GM12878 (cell line): ENCODE measurements at regions of chr4 and their contacts with region 1.

Region 1: GRCh38 chr4:128574706-128575105 is 234.8 kb upstream of the JADE1 start:
- DNase-seq: peak; percentile 25
- ATAC-seq: peak; percentile 99
- H3K4me3 ChIP-seq: no peak overlapping the region
- H3K27ac ChIP-seq: no peak overlapping the region
- H3K4me1 ChIP-seq: no peaks in the 10 kb centered on the region
- H3K27me3 ChIP-seq: no peaks in the 10 kb centered on the region
- CTCF ChIP-seq: peak; percentile 66 to 69 (median 68)
- EP300 ChIP-seq: no peak
- POLR2A ChIP-seq: no peak
- RAD21 ChIP-seq: peak; percentile 79

Region 2: GRCh38 chr4:128039568-128039967 is 535.1 kb before region 1 on chr4:
- CTCF ChIA-PET with region 1: no interaction called
- POLR2A ChIA-PET with region 1: no interaction called
- RAD21 ChIA-PET with region 1: no interaction called
- SMC1A ChIA-PET with region 1: no interaction called
- in situ Hi-C with region 1: no loop called
- intact Hi-C with region 1: no loop called
- DNase-seq: no peak
- ATAC-seq: no peak
- H3K4me3 ChIP-seq: no peak overlapping the region
- H3K27ac ChIP-seq: no peak overlapping the region
- H3K4me1 ChIP-seq: no peaks in the 10 kb centered on the region
- H3K27me3 ChIP-seq: no peaks in the 10 kb centered on the region
- CTCF ChIP-seq: no peak
- EP300 ChIP-seq: no peak
- POLR2A ChIP-seq: no peak
- RAD21 ChIP-seq: no peak

Region 3: DNA sequence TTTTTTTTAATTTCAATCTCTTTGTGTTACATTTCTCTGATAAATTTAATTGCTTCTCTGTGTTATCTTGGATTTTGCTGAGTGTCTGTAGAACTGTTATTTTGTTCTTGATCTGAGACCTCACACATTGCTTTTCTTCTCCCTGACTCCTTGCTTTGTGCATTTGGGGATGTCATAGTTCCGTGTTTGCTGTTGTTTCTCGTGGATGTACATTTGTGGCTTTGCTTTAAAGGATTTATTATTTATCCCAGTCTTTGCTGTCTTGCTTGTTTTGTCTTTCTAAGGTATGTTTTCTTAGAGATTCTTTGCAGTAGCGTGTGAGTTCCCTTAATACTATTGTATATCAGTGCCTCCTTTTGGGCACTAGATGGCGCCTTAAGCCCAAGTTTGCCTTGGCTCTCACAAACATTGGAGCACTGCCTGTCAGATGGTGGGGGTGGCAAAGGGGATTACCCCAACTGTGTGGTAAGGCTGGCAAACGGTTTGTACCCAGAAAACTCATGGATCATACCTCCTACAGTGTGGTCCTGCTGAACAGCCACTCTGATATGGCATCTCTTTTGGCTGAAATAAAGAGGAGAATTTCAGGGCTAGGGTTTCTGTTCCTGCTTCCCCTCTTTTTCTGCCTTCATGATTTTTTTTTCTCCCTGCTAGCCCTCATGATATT is 383.5 kb before region 1 on chr4:
- CTCF ChIA-PET with region 1: interaction called, 9 read pairs
- POLR2A ChIA-PET with region 1: no interaction called
- RAD21 ChIA-PET with region 1: interaction called, 3 read pairs
- SMC1A ChIA-PET with region 1: interaction called, 9 read pairs
- in situ Hi-C with region 1: no loop called
- intact Hi-C with region 1: loop called (anchors 2 kb)
- DNase-seq: peak; percentile 54
- ATAC-seq: peak; percentile 100
- H3K4me3 ChIP-seq: no peak overlapping the region
- H3K27ac ChIP-seq: no peak overlapping the region
- H3K4me1 ChIP-seq: peaks cover 2% of the 10 kb centered on the region; the same call in 1 of the 2 replicates
- H3K27me3 ChIP-seq: no peaks in the 10 kb centered on the region
- CTCF ChIP-seq: peak; percentile 79 to 97 (median 91); a peak in 5 of 6 replicates
- EP300 ChIP-seq: no peak
- POLR2A ChIP-seq: no peak
- RAD21 ChIP-seq: peak; percentile 94

Region 4: DNA sequence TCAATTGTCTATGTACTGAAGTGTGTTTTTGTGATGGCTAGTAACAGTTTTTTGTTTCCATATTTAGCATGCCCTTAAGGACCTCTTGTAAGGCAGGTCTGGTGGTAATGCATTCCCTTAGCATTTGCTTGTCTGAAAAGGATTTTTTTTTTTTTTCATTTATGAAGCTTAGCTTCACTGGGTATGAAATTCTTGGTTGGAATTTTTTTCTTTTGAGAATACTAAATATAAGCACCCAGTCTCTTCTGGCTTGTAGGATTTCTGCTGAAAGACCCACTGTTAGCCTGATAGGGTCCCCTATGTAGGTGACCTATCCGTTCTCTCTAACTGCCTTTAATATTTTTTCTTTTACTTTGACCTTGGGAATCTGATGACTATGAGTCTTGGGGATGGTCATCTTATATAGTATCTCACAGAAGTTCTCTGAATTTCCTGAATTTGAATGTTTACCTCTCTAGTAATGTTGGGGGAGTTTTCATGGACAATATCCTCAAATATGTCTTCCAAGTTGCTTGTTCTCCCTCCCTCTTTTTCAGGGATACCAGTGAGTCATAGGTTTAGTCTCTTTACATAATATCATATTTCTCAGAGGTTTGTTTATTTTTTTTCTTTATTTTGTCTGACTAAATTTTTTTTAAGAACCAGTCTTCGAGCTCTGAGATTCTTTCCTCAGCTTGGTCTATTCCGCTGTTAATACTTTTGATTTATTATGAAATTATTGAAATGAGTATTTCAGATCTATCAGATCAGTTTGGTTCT is 130.0 kb before region 1 on chr4:
- CTCF ChIA-PET with region 1: no interaction called
- POLR2A ChIA-PET with region 1: no interaction called
- RAD21 ChIA-PET with region 1: no interaction called
- SMC1A ChIA-PET with region 1: no interaction called
- in situ Hi-C with region 1: no loop called
- intact Hi-C with region 1: no loop called
- DNase-seq: no peak
- ATAC-seq: no peak
- H3K4me3 ChIP-seq: no peak overlapping the region
- H3K27ac ChIP-seq: no peak overlapping the region
- H3K4me1 ChIP-seq: no peaks in the 10 kb centered on the region
- H3K27me3 ChIP-seq: no peaks in the 10 kb centered on the region
- CTCF ChIP-seq: no peak
- EP300 ChIP-seq: no peak
- POLR2A ChIP-seq: no peak
- RAD21 ChIP-seq: no peak

Region 5: GRCh38 chr4:128536746-128537145 is 38.0 kb before region 1 on chr4:
- CTCF ChIA-PET with region 1: no interaction called
- POLR2A ChIA-PET with region 1: no interaction called
- RAD21 ChIA-PET with region 1: no interaction called
- SMC1A ChIA-PET with region 1: no interaction called
- in situ Hi-C with region 1: no loop called
- intact Hi-C with region 1: no loop called
- DNase-seq: no peak
- ATAC-seq: no peak
- H3K4me3 ChIP-seq: no peak overlapping the region
- H3K27ac ChIP-seq: no peak overlapping the region
- H3K4me1 ChIP-seq: no peaks in the 10 kb centered on the region
- H3K27me3 ChIP-seq: no peaks in the 10 kb centered on the region
- CTCF ChIP-seq: no peak
- EP300 ChIP-seq: no peak
- POLR2A ChIP-seq: no peak
- RAD21 ChIP-seq: no peak

Region 6: GRCh38 chr4:128553686-128554515 is 20.8 kb before region 1 on chr4:
- CTCF ChIA-PET with region 1: interaction called, 15 read pairs
- POLR2A ChIA-PET with region 1: no interaction called
- RAD21 ChIA-PET with region 1: interaction called, 4 read pairs
- SMC1A ChIA-PET with region 1: interaction called, 18 read pairs
- in situ Hi-C with region 1: no loop called
- intact Hi-C with region 1: no loop called
- DNase-seq: no peak
- ATAC-seq: no peak
- H3K4me3 ChIP-seq: peak overlapping the region; percentile 74
- H3K27ac ChIP-seq: no peak overlapping the region
- H3K4me1 ChIP-seq: peaks cover 9% of the 10 kb centered on the region; the same call in 1 of the 2 replicates
- H3K27me3 ChIP-seq: no peaks in the 10 kb centered on the region
- CTCF ChIP-seq: no peak
- EP300 ChIP-seq: no peak
- POLR2A ChIP-seq: no peak
- RAD21 ChIP-seq: no peak

Region 7: DNA sequence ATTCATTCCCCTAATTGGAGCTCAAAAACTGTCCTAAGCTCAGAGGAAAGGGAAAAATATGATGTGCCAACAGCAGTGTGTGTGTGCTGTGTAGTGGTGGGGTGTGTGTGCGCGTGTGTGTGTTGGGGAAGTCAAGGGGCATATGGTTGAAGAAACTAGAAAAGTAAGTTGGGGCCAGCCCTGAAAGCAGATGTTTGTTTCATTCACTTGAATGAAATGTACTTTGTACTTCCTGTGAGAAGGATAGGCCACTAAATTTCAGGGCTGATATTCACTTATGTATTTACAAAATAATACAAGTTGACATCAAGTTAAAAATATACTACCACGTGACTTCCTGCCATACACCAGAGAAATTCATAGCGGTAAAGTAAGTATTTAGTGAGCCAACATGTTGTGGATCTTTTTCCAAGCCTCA is 83.5 kb after region 1 on chr4:
- CTCF ChIA-PET with region 1: interaction called, 11 read pairs
- POLR2A ChIA-PET with region 1: no interaction called
- RAD21 ChIA-PET with region 1: interaction called, 3 read pairs
- SMC1A ChIA-PET with region 1: interaction called, 14 read pairs
- in situ Hi-C with region 1: no loop called
- intact Hi-C with region 1: no loop called
- DNase-seq: peak; percentile 11
- ATAC-seq: peak; percentile 62
- H3K4me3 ChIP-seq: no peak overlapping the region
- H3K27ac ChIP-seq: no peak overlapping the region
- H3K4me1 ChIP-seq: peaks cover 4% of the 10 kb centered on the region; the same call in 1 of the 2 replicates
- H3K27me3 ChIP-seq: no peaks in the 10 kb centered on the region
- CTCF ChIP-seq: no peak
- EP300 ChIP-seq: peak in 1 of 2 experiments; percentile 23; a peak in 1 of 4 replicates
- POLR2A ChIP-seq: no peak
- RAD21 ChIP-seq: no peak

Region 8: GRCh38 chr4:128803783-128804182 is 229.1 kb after region 1 on chr4:
- CTCF ChIA-PET with region 1: interaction called, 3 read pairs
- POLR2A ChIA-PET with region 1: no interaction called
- RAD21 ChIA-PET with region 1: interaction called, 10 read pairs
- SMC1A ChIA-PET with region 1: interaction called, 7 read pairs
- in situ Hi-C with region 1: loop called (anchors 5 kb)
- intact Hi-C with region 1: no loop called
- DNase-seq: no peak
- ATAC-seq: peak; percentile 94
- H3K4me3 ChIP-seq: no peak overlapping the region
- H3K27ac ChIP-seq: 0 out of 2 replicates have a peak overlapping the region, but pooled peaks have one; percentile 42
- H3K4me1 ChIP-seq: no peaks in the 10 kb centered on the region; the same call in 1 of the 2 replicates
- H3K27me3 ChIP-seq: no peaks in the 10 kb centered on the region
- CTCF ChIP-seq: no peak
- EP300 ChIP-seq: no peak
- POLR2A ChIP-seq: no peak
- RAD21 ChIP-seq: no peak

Region 9: GRCh38 chr4:128863312-128864075 is 288.8 kb after region 1 on chr4:
- CTCF ChIA-PET with region 1: interaction called, 14 read pairs
- POLR2A ChIA-PET with region 1: no interaction called
- RAD21 ChIA-PET with region 1: no interaction called
- SMC1A ChIA-PET with region 1: interaction called, 13 read pairs
- in situ Hi-C with region 1: loop called (anchors 5 kb)
- intact Hi-C with region 1: loop called (anchors 1 kb)
- DNase-seq: no peak
- ATAC-seq: peak; percentile 73
- H3K4me3 ChIP-seq: no peak overlapping the region; the same call in 1 of the 2 replicates
- H3K27ac ChIP-seq: peak overlapping the region; percentile 84
- H3K4me1 ChIP-seq: peaks cover 36% of the 10 kb centered on the region
- H3K27me3 ChIP-seq: no peaks in the 10 kb centered on the region
- CTCF ChIP-seq: peak; percentile 73 to 83 (median 81)
- EP300 ChIP-seq: no peak
- POLR2A ChIP-seq: no peak
- RAD21 ChIP-seq: peak; percentile 75